Dorsolateral prefrontal cortex (tissue), 120 donors: ENCODE measurements at regions of chr18 and their contacts with region 1.

Region 1: DNA sequence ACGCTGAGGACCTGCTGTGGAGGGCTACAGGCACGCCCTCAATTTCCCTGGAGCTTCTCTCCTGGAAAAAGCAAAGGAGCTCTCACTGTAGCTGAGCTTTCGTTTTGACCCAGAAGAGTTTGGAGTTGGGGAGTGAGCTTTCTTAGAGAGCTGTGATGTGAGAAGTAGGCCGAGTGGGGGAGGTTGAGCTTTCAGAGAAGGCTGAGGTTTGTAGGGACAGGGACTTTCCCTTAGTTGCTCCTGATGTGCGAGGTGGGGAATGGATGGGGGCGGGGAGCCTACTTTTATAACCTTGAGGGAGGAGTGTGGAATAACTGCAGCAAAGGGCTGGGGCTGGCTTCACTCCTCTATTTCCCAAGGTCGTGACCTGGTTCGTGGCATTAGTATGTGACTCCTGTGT is 47.1 kb downstream of the ZNF532 start:
- DNase-seq: no peak
- H3K4me3 ChIP-seq: peak overlapping the region in 6 of 59 donors; percentile 4 to 22 (median 14)
- H3K27ac ChIP-seq: peak overlapping the region in 58 of 59 donors; percentile 7 to 93 (median 82)
- H3K27me3 ChIP-seq: no peaks in the 10 kb centered on the region
- CTCF ChIP-seq: no peak

Region 2: GRCh38 chr18:58870130-58870529 is 41.6 kb before region 1 on chr18:
- intact Hi-C with region 1: loop called in 1 of 2 experiments (anchors 2 kb)
- DNase-seq: no peak
- H3K4me3 ChIP-seq: no peak overlapping the region
- H3K27ac ChIP-seq: peak overlapping the region in 53 of 59 donors; percentile 5 to 100 (median 81)
- H3K27me3 ChIP-seq: no peaks in the 10 kb centered on the region
- CTCF ChIP-seq: no peak

Region 3: DNA sequence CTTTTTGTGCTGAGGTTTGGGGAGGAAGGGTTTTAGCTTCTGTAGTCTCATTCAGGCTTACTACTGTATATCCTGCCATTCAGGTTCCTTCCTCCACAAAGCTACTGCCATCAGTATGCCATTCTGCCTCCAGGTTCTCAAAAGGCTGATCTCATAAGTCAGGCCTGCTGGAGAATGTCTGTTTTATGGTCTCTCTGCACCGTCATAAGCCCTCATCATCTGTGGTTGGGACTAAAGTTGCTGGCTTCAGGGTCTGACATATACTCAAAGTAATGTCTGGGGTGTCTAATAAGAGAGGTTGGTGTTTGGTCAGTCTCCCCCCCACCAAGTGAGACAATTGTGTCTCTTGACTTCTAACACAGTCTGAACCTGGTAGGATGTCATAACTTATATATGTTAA is 821.7 kb after region 1 on chr18:
- intact Hi-C with region 1: no loop called
- DNase-seq: no peak
- H3K4me3 ChIP-seq: no peak overlapping the region
- H3K27ac ChIP-seq: no peak overlapping the region
- H3K27me3 ChIP-seq: peaks cover 0 to 7% (median 0%) of the 10 kb centered on the region in 45 donors
- CTCF ChIP-seq: no peak